Keratinocyte (primary cell): ENCODE measurements at regions of chr6 and their contacts with region 1.

Region 1: GRCh38 chr6:169831450-169832246 is 80.2 kb downstream of the ERMARD start:
- DNase-seq: no peak
- H3K4me3 ChIP-seq: peak overlapping the region in 1 of 3 experiments; percentile 7
- H3K27ac ChIP-seq: no peak overlapping the region
- H3K4me1 ChIP-seq: peaks cover 24% of the 10 kb centered on the region
- H3K27me3 ChIP-seq: no peaks in the 10 kb centered on the region
- CTCF ChIP-seq: peak; percentile 94 to 99 (median 95)

Region 2: GRCh38 chr6:170129691-170130171 is 298.1 kb after region 1 on chr6:
- dilution Hi-C with region 1: loop called (anchors 25 kb)
- DNase-seq: peak; percentile 73
- H3K4me3 ChIP-seq: no peak overlapping the region
- H3K27ac ChIP-seq: no peak overlapping the region
- H3K4me1 ChIP-seq: peaks cover 16% of the 10 kb centered on the region
- H3K27me3 ChIP-seq: no peaks in the 10 kb centered on the region
- CTCF ChIP-seq: no peak

Region 3: GRCh38 chr6:170279977-170280688 is 448.5 kb after region 1 on chr6:
- dilution Hi-C with region 1: no loop called
- DNase-seq: no peak
- H3K4me3 ChIP-seq: no peak overlapping the region
- H3K27ac ChIP-seq: no peak overlapping the region
- H3K4me1 ChIP-seq: peaks cover 4% of the 10 kb centered on the region
- H3K27me3 ChIP-seq: no peaks in the 10 kb centered on the region
- CTCF ChIP-seq: no peak